ENCODE measurements at regions of chr1 and their contacts with region 1.

Region 1: GRCh38 chr1:224959115-224959514 is 29.6 kb downstream of the DNAH14 start:
- DNase-seq: no peak
- H3K4me3 ChIP-seq: no peak overlapping the region
- H3K27ac ChIP-seq: no peak overlapping the region
- H3K4me1 ChIP-seq: no peaks in the 10 kb centered on the region
- H3K27me3 ChIP-seq: no peaks in the 10 kb centered on the region
- CTCF ChIP-seq: no peak
- POLR2A ChIP-seq: no peak

Region 2: GRCh38 chr1:224196813-224197625 is 762.1 kb before region 1 on chr1:
- intact Hi-C with region 1: no loop called
- DNase-seq: no peak
- H3K4me3 ChIP-seq: no peak overlapping the region
- H3K27ac ChIP-seq: no peak overlapping the region
- H3K4me1 ChIP-seq: peaks cover 5 to 12% of the 10 kb centered on the region in 2 donors
- H3K27me3 ChIP-seq: no peaks in the 10 kb centered on the region
- CTCF ChIP-seq: no peak
- POLR2A ChIP-seq: no peak

Region 3: GRCh38 chr1:225146478-225146877 is 187.4 kb after region 1 on chr1:
- intact Hi-C with region 1: no loop called
- DNase-seq: no peak
- H3K4me3 ChIP-seq: no peak overlapping the region
- H3K27ac ChIP-seq: no peak overlapping the region
- H3K4me1 ChIP-seq: no peaks in the 10 kb centered on the region
- H3K27me3 ChIP-seq: no peaks in the 10 kb centered on the region
- CTCF ChIP-seq: no peak
- POLR2A ChIP-seq: no peak

Region 4: GRCh38 chr1:225182716-225183115 is 223.6 kb after region 1 on chr1:
- intact Hi-C with region 1: loop called in 1 of 2 experiments (anchors 10 kb)
- DNase-seq: no peak
- H3K4me3 ChIP-seq: no peak overlapping the region
- H3K27ac ChIP-seq: no peak overlapping the region
- H3K4me1 ChIP-seq: no peaks in the 10 kb centered on the region
- H3K27me3 ChIP-seq: no peaks in the 10 kb centered on the region
- CTCF ChIP-seq: no peak
- POLR2A ChIP-seq: no peak

Region 5: DNA sequence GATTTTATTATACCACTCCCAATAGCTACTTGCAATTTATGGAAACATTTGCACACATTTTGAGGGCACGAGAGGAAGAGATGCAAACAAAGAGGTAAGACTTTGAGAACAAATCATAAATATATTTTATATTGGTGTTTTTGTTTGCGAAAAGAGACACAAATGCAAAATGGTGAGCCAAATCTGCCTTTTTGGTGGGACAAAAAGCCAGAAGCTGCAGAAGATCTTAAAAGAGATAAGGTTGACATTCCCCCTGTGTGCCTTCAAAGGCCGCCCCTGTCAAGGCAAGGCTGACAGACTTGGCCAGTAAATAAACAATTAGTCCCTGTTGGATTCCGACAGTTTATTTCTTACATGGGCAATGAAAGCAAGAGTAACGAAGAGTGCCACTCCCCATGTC is 345.9 kb after region 1 on chr1:
- intact Hi-C with region 1: no loop called
- DNase-seq: no peak
- H3K4me3 ChIP-seq: no peak overlapping the region
- H3K27ac ChIP-seq: no peak overlapping the region
- H3K4me1 ChIP-seq: no peaks in the 10 kb centered on the region
- H3K27me3 ChIP-seq: no peaks in the 10 kb centered on the region
- CTCF ChIP-seq: no peak
- POLR2A ChIP-seq: no peak

Measured in adrenal gland (tissue), 19 donors.